Activated T-helper 1 cell treated with anti-CD3 and anti-CD28 coated beads, Interleukin-12 subunit alpha, Interleukin-12 subunit beta, Interleukin-2, Interleukin-4 antibody, amounts not matched to agents 30 ng/mL and 10 ng/mL and 1 ng/mL, durations not matched to agents 14 hours and 24 hours and 36 hours (primary cell): ENCODE measurements at regions of chr14 and their contacts with region 1.

Region 1: GRCh38 chr14:73613046-73613383 is 698 bp downstream of the ACOT6 start:
- DNase-seq: no peak
- H3K4me3 Mint-ChIP-seq: peak overlapping the region; percentile 83
- H3K27ac Mint-ChIP-seq: peak overlapping the region; percentile 52
- H3K4me1 Mint-ChIP-seq: peaks cover 5% of the 10 kb centered on the region
- H3K27me3 Mint-ChIP-seq: peaks cover 7% of the 10 kb centered on the region

Region 2: DNA sequence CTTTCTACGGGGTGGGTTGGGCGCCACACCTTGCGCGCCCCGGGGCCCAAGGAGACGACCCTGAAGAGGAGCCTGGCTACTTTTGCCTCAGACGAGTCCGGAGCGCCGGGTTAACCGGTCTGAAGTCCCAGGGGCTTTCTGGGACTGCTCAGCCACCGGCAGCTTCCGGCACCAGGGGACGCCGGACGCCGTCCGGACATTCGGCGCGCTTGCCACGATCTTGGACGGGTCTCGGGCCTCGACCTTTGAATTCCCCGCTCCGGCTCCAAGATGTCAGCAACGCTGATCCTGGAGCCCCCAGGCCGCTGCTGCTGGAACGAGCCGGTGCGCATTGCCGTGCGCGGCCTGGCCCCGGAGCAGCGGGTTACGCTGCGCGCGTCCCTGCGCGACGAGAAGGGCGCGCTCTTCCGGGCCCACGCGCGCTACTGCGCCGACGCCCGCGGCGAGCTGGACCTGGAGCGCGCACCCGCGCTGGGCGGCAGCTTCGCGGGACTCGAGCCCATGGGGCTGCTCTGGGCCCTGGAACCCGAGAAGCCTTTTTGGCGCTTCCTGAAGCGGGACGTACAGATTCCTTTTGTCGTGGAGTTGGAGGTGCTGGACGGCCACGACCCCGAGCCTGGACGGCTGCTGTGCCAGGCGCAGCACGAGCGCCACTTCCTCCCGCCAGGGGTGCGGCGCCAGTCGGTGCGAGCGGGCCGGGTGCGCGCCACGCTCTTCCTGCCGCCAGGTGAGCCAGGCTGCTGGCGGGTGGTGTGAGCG is 21.1 kb before region 1 on chr14 and contains the start of gene ACOT4:
- intact Hi-C with region 1: loop called (anchors 2 kb)
- DNase-seq: peak; percentile 32
- H3K4me3 Mint-ChIP-seq: peak within 1 kb of the TSS; percentile 72
- H3K27ac Mint-ChIP-seq: no peak within 1 kb of the TSS
- H3K4me1 Mint-ChIP-seq: no peaks in the 10 kb centered on the region
- H3K27me3 Mint-ChIP-seq: peaks cover 5% of the 10 kb centered on the region
- total RNA-seq, gene ACOT4: 1.1 and 1.9 TPM in 2 replicates